GM18951 (cell line): ENCODE measurements at regions of chr11 and their contacts with region 1.

Region 1: GRCh38 chr11:120108154-120108865 is 29.6 kb downstream of the TRIM29 start:
- POLR2A ChIP-seq: no peak

Region 2: DNA sequence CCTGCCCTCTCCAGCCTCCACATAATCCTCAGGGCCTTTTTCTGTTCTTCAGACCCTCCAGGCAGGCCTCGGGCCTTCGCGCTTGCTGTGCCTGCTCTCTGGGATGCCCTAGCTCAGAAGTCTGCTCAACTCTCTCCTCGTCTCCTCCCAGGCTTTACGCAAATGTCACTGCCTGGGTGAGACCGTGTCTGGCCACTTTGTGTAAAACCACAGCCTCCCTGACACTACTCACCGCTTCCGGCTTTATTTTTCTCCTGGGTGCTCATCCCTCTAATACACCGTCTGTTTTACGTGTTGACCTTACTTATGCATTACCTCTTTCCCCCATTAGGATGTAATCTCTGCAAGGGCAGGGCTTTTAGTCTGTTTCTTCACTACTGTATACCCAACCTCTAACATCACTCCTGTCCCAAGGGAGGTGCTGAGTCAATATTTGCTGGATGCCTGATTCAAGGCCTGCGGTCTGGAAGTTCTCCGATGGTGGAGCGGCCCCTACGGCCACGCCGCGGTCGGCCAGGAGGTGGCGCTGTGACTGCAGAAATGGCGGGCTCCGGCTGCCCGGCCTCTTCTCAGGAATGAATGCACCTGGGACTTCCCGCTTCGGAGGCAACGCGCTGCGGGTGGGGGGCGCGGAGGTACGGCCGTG is 627.2 kb before region 1 on chr11:
- in situ Hi-C with region 1: loop called (anchors 25 kb)
- POLR2A ChIP-seq: no peak

Region 3: GRCh38 chr11:119666463-119667131 is 441.7 kb before region 1 on chr11:
- in situ Hi-C with region 1: loop called (anchors 25 kb)
- POLR2A ChIP-seq: no peak

Region 4: DNA sequence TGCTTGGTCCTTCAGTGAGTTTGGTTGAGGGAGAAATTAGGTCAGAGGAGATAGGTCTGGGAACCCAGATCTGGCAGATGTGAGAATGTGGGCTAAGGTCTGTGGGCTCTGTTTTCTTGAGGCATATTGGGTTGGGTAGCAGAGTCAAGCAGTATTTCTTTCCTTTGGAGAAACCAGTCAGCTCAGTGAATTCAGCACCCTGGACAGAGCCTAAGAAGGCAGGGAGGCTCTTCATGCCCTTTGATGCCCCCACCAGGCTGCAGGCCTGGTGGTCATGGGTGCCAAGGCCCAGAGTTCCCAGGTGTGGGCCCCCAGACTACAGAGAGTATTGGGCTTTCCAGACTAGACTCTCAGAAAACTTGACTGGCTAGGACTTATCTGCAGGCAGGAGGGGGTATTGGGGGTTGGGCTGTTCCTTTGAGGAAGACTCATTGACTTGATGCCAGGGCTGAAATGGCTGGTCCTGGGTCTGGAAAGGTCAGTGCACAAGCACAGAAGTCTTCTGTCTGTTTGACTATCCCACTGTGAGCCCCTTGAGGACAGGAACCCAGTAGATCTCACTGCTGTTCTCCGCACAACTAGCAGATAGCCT is 334.0 kb before region 1 on chr11:
- in situ Hi-C with region 1: no loop called
- POLR2A ChIP-seq: no peak

Region 5: GRCh38 chr11:119975561-119976152 is 132.7 kb before region 1 on chr11:
- in situ Hi-C with region 1: no loop called
- POLR2A ChIP-seq: no peak